Lower leg skin (tissue), 4 donors: ENCODE measurements at regions of chr17 and their contacts with region 1.

Region 1: GRCh38 chr17:76562734-76563148 is 22.9 kb downstream of the PRCD start:
- DNase-seq: no peak
- H3K4me3 ChIP-seq: no peak overlapping the region
- CTCF ChIP-seq: no peak
- POLR2A ChIP-seq: no peak

Region 2: GRCh38 chr17:76473541-76473985 is 89.2 kb before region 1 on chr17:
- intact Hi-C with region 1: no loop called
- DNase-seq: no peak
- H3K4me3 ChIP-seq: no peak overlapping the region
- CTCF ChIP-seq: no peak
- POLR2A ChIP-seq: no peak

Region 3: DNA sequence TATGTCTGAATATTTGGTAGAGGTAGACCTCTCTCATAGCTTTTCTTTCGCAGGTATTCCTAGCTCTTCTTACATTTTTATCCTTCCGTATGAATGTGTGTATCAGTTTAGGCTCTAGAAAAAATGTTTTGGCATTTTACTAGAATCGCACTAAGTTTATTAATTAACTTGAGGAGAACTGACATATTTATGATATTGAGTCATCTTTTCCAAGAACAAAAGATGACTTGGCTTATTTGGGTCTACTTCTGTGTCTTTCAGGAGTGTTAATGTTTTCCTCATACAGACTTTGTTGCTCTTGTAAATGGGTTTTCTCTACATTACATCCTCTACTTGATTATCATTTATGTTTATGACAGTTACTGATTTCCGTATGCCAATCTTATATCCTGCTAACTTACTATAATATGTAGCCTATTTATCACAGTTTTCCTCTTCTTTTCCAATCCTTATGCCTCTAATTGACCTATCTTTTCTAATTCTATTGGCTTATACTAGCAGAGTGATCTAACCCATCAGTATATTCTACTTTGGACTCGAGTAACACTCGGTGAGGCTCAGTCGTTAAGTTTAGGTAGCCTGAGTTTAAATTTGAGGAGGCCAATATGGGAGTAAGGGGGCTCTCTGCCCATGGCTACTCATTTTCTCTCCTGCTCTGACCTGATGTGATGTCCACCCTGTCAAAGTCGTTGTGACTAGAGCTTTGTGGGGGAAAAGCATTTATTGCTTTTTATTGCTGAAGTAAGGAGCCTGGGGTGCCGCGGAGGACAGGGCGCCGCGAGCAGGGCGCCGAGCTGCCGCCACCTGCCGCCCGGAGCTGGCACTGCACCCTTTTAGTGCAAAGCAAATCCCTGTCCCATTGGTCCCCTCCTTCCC is 60.8 kb after region 1 on chr17:
- intact Hi-C with region 1: loop called (anchors 5 kb)
- DNase-seq: peak; percentile 52 to 94
- H3K4me3 ChIP-seq: no peak overlapping the region
- CTCF ChIP-seq: peak in 1 of 3 donors; percentile 67
- POLR2A ChIP-seq: no peak